Right lobe of liver (tissue), 6 donors: ENCODE measurements at regions of chr15 and their contacts with region 1.

Region 1: DNA sequence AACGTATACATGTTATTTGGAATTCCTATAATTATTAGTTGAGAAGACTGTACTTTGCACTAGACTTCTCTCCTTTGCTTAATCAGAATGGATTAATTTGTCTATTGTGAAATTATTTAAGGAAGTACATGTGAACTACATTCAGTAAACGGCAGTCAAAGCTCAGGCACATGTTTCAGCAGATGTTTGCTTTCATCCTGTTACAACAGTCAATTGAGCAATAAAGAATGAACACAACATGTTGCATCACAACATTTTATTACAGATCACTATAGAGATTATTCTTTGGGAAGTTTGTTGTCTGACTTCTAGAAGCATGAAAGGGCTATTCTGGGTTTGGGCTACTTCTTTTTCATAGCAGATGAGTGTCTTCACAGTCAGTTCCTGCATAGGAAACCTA is 39.2 kb downstream of the RAB27A start:
- DNase-seq: no peak
- ATAC-seq: peak; percentile 72 to 89 (median 75)
- H3K4me3 ChIP-seq: no peak overlapping the region
- H3K27ac ChIP-seq: peak overlapping the region; percentile 40 to 66 (median 64)
- H3K4me1 ChIP-seq: peaks cover 0 to 49% (median 20%) of the 10 kb centered on the region in 4 donors
- H3K27me3 ChIP-seq: no peaks in the 10 kb centered on the region
- CTCF ChIP-seq: no peak
- POLR2A ChIP-seq: no peak

Region 2: DNA sequence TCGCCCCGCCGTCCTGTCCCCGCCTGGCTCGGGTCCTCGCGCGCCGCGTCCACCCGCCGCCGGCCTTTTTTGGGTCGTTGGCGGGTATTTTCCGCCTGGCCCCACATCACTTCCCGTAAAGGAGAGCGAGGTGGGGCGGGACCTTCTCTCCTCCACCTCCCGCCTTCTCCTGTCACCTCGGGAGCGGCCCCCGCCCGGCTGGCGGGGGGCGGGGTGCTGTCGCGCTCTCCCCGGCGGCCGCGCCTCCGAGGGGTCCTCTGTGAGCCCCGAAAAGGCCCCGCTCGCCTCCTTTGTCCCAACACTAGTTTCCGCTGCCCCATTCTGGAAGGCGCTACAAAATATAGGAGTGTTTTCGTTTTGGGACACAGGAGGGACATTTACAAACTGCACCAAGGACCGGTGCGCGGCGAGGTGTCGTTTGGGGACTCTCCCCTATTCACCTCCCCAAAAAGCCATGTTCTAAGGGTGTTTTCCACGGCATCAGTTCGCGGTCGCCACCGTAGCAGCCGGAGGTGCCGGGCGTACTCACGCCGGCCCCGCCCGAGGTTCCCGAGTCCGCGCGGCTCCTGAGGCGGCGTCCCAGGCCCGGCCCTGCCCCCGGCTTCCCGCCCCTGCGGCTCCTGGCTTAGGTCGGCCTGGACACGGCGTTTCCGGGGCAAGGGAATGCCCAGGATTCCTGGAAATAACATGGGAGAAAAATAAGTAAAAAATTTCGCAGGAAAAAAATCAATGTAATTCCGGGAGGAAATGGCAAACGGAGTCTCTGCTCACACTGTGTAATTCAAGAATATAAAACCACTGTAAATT is 39.5 kb after region 1 on chr15 and contains the start of gene RAB27A:
- intact Hi-C with region 1: loop called in 1 of 2 experiments (anchors 5 kb)
- DNase-seq: peak; percentile 88 to 92 (median 88)
- ATAC-seq: peak; percentile 83 to 91 (median 88)
- H3K4me3 ChIP-seq: peak within 1 kb of the TSS; percentile 85 to 92 (median 85)
- H3K27ac ChIP-seq: peak within 1 kb of the TSS; percentile 77 to 95 (median 93)
- H3K4me1 ChIP-seq: peaks cover 0 to 16% (median 3%) of the 10 kb centered on the region in 4 donors
- H3K27me3 ChIP-seq: no peaks in the 10 kb centered on the region
- CTCF ChIP-seq: no peak
- POLR2A ChIP-seq: peak; percentile 71
- total RNA-seq, gene RAB27A: 15.9 to 41.4 (median 21.0) TPM